Activated CD4-positive, alpha-beta T cell treated with anti-CD3 and anti-CD28 coated beads, Interleukin-2, amount 10 ng/mL, durations not matched to agents 24 days and 14 days (primary cell): ENCODE measurements at regions of chr17 and their contacts with region 1.

Region 1: DNA sequence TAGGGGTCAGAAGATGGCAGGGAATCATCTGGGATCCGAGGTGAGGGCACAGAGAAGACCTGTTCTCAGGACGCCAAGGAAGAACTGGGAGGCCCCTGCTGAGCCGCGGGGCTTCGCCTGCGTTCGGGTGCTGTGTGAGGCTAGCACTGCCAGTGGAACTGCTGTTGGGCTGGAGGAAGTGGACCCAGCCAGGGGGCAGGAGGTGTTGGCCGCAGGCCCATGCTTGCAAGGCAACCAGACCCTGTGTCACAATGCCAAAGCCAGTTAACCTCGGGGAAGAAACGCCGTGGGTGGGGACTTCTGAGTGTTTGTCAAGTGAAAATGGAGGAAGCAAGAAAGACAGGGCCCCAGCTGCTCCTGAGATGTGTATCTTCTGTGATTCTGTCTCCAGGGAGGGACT is 185.5 kb downstream of the LGALS9B start:
- DNase-seq: no peak
- H3K4me3 Mint-ChIP-seq: no peak overlapping the region
- H3K27ac Mint-ChIP-seq: peak overlapping the region; percentile 17
- H3K4me1 Mint-ChIP-seq: peaks cover 33% of the 10 kb centered on the region
- H3K27me3 Mint-ChIP-seq: no peaks in the 10 kb centered on the region

Region 2: DNA sequence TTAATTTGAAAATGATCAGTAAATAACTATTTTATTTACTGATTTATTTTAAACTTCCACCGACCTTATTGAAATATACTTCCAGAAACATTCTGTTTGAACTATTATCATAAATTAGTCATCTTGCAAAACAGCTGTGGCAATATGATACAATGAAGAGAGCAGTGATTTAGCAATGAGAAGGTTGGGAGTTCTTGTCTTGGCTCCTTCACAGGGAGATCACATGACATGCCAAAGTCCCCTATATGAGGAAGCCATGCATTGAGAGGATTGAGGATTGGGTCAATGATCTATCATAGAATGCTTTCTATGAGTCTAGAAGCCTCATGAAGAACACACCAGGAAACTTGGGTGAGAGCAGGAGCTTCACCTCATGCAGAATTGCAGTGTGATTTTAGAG is 37.2 kb before region 1 on chr17:
- intact Hi-C with region 1: loop called (anchors 5 kb)
- DNase-seq: no peak
- H3K4me3 Mint-ChIP-seq: no peak overlapping the region
- H3K27ac Mint-ChIP-seq: no peak overlapping the region
- H3K4me1 Mint-ChIP-seq: peaks cover 18% of the 10 kb centered on the region
- H3K27me3 Mint-ChIP-seq: no peaks in the 10 kb centered on the region